ENCODE measurements at regions of chr7 and their contacts with region 1.

Region 1: DNA sequence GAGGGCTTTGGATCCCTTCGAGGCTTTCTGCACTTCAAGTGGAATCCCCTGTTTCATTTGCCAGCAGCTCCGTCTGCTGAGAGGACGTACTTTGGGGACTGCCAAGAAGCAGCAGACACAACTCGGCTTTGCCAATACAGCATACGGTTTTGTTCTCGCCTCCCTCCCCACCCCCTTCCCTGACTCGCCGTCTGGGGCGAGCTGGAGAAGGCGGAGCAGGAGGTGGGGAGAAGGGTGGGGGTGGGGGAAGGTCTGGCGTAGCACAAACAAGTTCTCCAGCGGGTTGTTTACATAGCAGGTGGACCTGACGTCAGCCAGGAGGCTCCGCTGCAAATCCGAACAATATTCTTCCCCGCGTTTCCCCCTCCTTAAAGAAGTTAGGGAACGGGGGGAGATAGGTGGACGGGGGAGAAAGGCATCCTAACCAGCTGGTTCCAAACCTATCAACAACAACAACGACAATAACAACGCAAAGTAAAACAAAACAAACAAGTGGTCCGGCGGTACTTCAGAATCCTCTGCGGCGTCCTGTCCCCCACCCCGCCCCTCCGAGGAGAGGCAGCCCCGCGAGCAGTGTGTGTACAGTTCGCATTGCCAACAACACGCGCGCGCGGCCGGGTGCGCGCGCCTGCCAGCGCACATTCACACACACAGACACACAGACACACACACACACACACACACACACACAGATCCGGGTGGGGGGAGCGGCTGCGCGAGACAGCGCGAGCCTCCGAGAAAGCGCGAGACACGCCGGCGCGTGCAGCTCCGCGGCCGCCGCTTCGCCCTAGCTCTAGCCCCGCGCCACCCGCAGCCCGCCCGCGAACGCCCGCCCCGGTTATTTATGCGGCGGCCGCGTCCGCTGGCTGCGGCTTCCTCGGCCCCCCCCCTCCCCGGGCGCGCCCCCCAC is 167.0 kb upstream of the PPP1R3A start:
- DNase-seq: peak; percentile 61
- ATAC-seq: peak; percentile 73
- H3K4me3 ChIP-seq: peak overlapping the region; percentile 66
- H3K27ac ChIP-seq: no peak overlapping the region
- H3K4me1 ChIP-seq: peaks cover 4% of the 10 kb centered on the region; the same call in 1 of the 2 replicates
- H3K27me3 ChIP-seq: peaks cover 52% of the 10 kb centered on the region
- CTCF ChIP-seq: no peak
- POLR2A ChIP-seq: no peak
- RAD21 ChIP-seq: no peak

Region 2: GRCh38 chr7:113521468-113521867 is 564.4 kb before region 1 on chr7:
- CTCF ChIA-PET with region 1: no interaction called
- POLR2A ChIA-PET with region 1: no interaction called
- dilution Hi-C with region 1: no loop called
- in situ Hi-C with region 1: no loop called
- intact Hi-C with region 1: no loop called
- DNase-seq: peak; percentile 8
- ATAC-seq: peak; percentile 40
- H3K4me3 ChIP-seq: no peak overlapping the region
- H3K27ac ChIP-seq: no peak overlapping the region
- H3K4me1 ChIP-seq: no peaks in the 10 kb centered on the region
- H3K27me3 ChIP-seq: no peaks in the 10 kb centered on the region
- CTCF ChIP-seq: no peak
- POLR2A ChIP-seq: no peak
- RAD21 ChIP-seq: no peak

Region 3: DNA sequence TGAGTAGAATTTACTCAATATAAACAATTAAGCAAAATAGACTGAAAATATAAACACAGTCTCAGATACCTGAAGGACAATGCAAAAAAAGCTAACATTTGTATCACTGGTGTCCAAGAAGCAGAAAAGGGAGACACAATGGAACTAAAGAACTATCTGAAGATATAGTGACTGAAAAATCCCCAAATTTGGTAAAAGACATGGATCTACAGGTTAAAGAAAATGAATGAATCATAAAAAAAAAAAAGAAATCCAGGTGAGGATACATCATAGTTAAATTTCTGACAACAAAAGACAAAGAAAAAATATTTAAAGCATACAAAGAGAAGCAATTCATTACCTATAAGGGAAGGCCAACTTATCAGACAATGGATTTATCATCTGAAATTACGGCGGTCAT is 52.4 kb before region 1 on chr7:
- CTCF ChIA-PET with region 1: no interaction called
- POLR2A ChIA-PET with region 1: no interaction called
- dilution Hi-C with region 1: no loop called
- in situ Hi-C with region 1: no loop called
- intact Hi-C with region 1: no loop called
- DNase-seq: no peak
- ATAC-seq: no peak
- H3K4me3 ChIP-seq: no peak overlapping the region
- H3K27ac ChIP-seq: no peak overlapping the region
- H3K4me1 ChIP-seq: no peaks in the 10 kb centered on the region
- H3K27me3 ChIP-seq: no peaks in the 10 kb centered on the region
- CTCF ChIP-seq: no peak
- POLR2A ChIP-seq: no peak
- RAD21 ChIP-seq: no peak

Region 4: DNA sequence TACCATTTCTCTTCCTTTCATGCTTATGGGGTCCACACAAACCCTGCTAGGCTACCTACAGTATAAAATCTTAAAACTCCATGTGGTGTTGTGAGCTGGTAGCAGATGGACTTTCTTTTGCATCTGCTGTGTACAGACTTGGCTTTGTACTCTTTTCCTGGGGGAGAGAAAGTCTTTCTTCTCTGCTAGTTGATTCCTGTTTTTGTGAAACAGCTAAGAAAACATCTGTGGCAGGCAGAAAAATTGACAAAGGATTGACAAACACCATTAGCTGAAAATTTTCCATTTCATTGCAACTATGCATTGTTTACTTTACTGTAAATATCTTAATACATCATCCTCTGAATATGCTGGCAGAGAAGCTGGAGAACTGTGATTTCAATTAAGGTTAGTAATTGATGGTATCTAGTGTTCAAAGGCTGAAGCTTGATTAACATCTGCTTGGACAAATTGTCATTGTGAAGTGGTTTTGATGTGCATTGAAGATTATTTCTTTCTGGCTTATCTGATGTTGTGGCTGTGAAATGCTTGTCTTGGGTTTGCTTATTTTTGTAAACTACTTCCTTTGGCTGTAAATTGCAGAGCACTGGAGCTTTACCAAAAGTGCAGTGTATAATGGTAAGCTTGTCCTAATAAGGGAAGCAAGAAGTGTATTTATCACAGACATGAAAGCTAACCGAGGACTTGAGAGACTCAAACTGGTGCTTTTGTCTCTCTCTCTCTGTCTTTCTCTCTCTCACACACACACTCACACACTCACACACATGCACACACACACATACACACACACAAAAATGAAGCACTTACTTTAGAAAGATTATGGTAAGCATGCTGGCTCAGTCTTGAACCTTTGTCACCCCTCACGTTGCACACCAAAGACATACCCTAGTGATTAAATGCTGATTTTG is 328.6 kb after region 1 on chr7 and contains the start of gene FOXP2:
- CTCF ChIA-PET with region 1: no interaction called
- POLR2A ChIA-PET with region 1: no interaction called
- dilution Hi-C with region 1: no loop called
- in situ Hi-C with region 1: no loop called
- intact Hi-C with region 1: loop called (anchors 5 kb)
- DNase-seq: peak; percentile 48
- ATAC-seq: peak; percentile 38
- H3K4me3 ChIP-seq: peak within 1 kb of the TSS; percentile 9; the same call in 1 of the 2 replicates
- H3K27ac ChIP-seq: peak within 1 kb of the TSS; percentile 57; the same call in 1 of the 2 replicates
- H3K4me1 ChIP-seq: peaks cover 7% of the 10 kb centered on the region
- H3K27me3 ChIP-seq: no peaks in the 10 kb centered on the region
- CTCF ChIP-seq: no peak
- POLR2A ChIP-seq: no peak
- RAD21 ChIP-seq: no peak
- total RNA-seq, gene FOXP2: 1.1 and 1.7 TPM in 2 replicates

Region 5: DNA sequence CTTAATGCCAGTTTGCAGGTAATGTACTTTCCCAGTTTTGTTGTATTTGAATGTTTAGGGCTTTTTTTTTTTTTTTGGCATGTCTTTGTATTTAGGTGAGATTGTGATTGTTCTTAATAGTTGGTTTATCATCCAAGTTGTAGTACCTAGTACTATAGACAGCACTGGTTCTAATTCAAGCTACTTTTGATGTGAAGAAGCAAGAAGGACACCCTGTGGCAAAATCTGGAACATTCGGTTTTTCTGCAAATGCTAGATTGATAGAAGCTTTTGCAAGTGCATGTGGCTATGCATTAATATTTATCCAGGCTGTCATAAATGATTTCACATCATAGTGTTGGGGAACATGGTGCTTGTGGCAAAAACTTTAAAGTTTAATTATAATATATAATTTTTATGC is 577.7 kb after region 1 on chr7:
- CTCF ChIA-PET with region 1: interaction called, 3 read pairs
- POLR2A ChIA-PET with region 1: no interaction called
- dilution Hi-C with region 1: no loop called
- in situ Hi-C with region 1: no loop called
- intact Hi-C with region 1: loop called (anchors 2 kb)
- DNase-seq: peak; percentile 34
- ATAC-seq: no peak
- H3K4me3 ChIP-seq: no peak overlapping the region
- H3K27ac ChIP-seq: no peak overlapping the region
- H3K4me1 ChIP-seq: no peaks in the 10 kb centered on the region
- H3K27me3 ChIP-seq: no peaks in the 10 kb centered on the region
- CTCF ChIP-seq: peak; percentile 37
- POLR2A ChIP-seq: no peak
- RAD21 ChIP-seq: peak; percentile 32; the same call in 1 of the 2 replicates

Region 6: DNA sequence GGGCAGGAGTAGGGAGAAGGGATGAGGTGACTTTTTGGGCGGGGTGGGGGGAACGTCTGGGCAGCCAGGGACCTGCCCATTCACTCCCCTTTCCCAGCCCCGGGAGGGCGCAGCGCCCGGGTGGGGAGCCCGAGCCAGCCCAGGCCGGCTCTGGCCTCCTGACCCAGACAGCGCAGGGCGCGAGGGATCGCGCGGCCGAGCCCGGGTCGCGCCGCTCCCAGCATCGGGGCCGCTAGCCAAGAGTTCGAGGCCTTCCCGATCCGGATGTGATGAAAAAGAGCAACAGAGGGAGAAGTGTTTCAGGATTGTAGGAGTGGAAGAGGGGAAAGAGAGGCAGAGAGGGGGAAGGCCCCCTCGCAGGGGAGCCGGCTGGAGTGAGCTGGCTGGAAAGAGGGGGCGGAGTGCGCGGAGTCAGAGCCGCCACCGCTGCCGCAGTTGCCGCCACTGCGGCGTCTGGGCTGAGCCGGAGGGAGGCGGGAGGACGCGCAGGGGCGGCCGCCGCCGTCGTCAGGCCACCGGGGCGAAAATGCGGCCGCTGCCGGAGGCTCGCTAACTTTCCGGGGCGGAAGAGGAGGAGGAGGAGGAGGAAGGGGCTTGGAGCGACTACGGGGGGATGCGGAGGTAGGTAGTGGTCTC is 836.3 kb after region 1 on chr7 and contains the start of gene MDFIC:
- CTCF ChIA-PET with region 1: no interaction called
- POLR2A ChIA-PET with region 1: no interaction called
- dilution Hi-C with region 1: no loop called
- in situ Hi-C with region 1: no loop called
- intact Hi-C with region 1: loop called (anchors 10 kb)
- DNase-seq: peak; percentile 64
- ATAC-seq: peak; percentile 79
- H3K4me3 ChIP-seq: peak within 1 kb of the TSS; percentile 68
- H3K27ac ChIP-seq: peak within 1 kb of the TSS; percentile 77
- H3K4me1 ChIP-seq: peaks cover 4% of the 10 kb centered on the region; the same call in 1 of the 2 replicates
- H3K27me3 ChIP-seq: no peaks in the 10 kb centered on the region
- CTCF ChIP-seq: no peak
- POLR2A ChIP-seq: peak; percentile 80
- RAD21 ChIP-seq: peak; percentile 15
- total RNA-seq, gene MDFIC: 29.7 and 35.0 TPM in 2 replicates

Region 7: DNA sequence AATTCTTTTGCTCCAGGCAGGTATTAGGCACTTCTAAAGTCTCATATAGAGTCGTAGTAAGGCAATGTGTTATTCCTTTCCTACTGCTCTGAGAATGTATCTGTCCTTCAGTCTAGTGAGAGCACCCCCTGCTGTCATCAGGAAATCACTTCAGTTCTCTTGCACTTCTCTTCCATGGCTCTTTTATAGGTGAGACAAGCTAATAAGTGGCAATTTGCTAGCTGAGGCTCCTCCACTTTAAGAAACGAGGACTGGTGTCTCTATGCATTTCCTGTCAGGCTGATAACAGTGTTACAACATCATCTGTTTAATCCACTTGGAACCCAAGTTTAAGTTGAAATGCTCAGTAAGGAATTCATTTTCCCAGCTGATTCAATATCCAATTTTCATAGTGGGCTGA is 1594.1 kb after region 1 on chr7:
- CTCF ChIA-PET with region 1: no interaction called
- POLR2A ChIA-PET with region 1: no interaction called
- dilution Hi-C with region 1: no loop called
- in situ Hi-C with region 1: no loop called
- intact Hi-C with region 1: loop called (anchors 5 kb)
- DNase-seq: peak; percentile 59
- ATAC-seq: peak; percentile 61; the same call in 1 of the 2 replicates
- H3K4me3 ChIP-seq: no peak overlapping the region
- H3K27ac ChIP-seq: no peak overlapping the region
- H3K4me1 ChIP-seq: no peaks in the 10 kb centered on the region
- H3K27me3 ChIP-seq: no peaks in the 10 kb centered on the region
- CTCF ChIP-seq: peak; percentile 53
- POLR2A ChIP-seq: no peak
- RAD21 ChIP-seq: peak; percentile 58

Region 8: GRCh38 chr7:115910541-115911164 is 1824.8 kb after region 1 on chr7:
- CTCF ChIA-PET with region 1: no interaction called
- POLR2A ChIA-PET with region 1: no interaction called
- dilution Hi-C with region 1: no loop called
- in situ Hi-C with region 1: no loop called
- intact Hi-C with region 1: loop called (anchors 5 kb)
- DNase-seq: peak; percentile 38
- ATAC-seq: peak; percentile 77
- H3K4me3 ChIP-seq: no peak overlapping the region
- H3K27ac ChIP-seq: no peak overlapping the region
- H3K4me1 ChIP-seq: no peaks in the 10 kb centered on the region
- H3K27me3 ChIP-seq: no peaks in the 10 kb centered on the region
- CTCF ChIP-seq: peak; percentile 60
- POLR2A ChIP-seq: no peak
- RAD21 ChIP-seq: peak; percentile 65